ENCODE measurements at regions of chr19 and their contacts with region 1.

Region 1: GRCh38 chr19:42132851-42133528 is 744 bp upstream of the POU2F2 start:
- DNase-seq: no peak
- H3K4me3 ChIP-seq: peak overlapping the region; percentile 31 to 45 (median 33)
- H3K27ac ChIP-seq: no peak overlapping the region
- H3K4me1 ChIP-seq: peaks cover 11 to 22% (median 18%) of the 10 kb centered on the region in 4 donors
- H3K27me3 ChIP-seq: peaks cover 0 to 66% (median 15%) of the 10 kb centered on the region in 4 donors
- CTCF ChIP-seq: peak in 2 of 3 experiments; percentile 88 to 98
- EP300 ChIP-seq: no peak
- POLR2A ChIP-seq: no peak

Region 2: DNA sequence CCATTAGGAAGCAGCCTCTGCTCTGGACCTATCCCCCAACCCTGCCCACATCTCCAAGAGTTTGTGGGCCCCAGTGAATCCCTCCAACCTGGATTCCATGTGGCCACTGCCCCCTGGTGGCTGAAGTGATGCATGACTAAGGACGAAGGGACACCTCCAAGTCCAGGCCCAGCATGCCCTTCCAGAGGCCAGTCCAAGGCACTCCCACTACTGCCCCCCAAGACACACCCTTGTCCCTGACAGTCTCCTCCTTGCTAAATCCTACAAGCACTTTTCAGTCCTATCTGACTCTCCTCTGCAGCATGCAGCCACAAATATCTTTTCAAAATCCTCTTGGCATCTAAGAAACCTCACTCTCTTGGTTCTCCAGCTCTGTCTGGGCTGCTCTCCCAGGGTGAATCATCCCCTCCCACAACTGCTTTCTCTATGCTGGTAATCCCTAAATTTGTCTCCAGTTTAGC is 51.4 kb after region 1 on chr19:
- intact Hi-C with region 1: loop called (anchors 2 kb)
- DNase-seq: no peak
- H3K4me3 ChIP-seq: no peak overlapping the region
- H3K27ac ChIP-seq: no peak overlapping the region
- H3K4me1 ChIP-seq: no peaks in the 10 kb centered on the region
- H3K27me3 ChIP-seq: peaks cover 0 to 36% (median 20%) of the 10 kb centered on the region in 4 donors
- CTCF ChIP-seq: peak; percentile 82 to 91 (median 85)
- EP300 ChIP-seq: no peak
- POLR2A ChIP-seq: no peak

Region 3: DNA sequence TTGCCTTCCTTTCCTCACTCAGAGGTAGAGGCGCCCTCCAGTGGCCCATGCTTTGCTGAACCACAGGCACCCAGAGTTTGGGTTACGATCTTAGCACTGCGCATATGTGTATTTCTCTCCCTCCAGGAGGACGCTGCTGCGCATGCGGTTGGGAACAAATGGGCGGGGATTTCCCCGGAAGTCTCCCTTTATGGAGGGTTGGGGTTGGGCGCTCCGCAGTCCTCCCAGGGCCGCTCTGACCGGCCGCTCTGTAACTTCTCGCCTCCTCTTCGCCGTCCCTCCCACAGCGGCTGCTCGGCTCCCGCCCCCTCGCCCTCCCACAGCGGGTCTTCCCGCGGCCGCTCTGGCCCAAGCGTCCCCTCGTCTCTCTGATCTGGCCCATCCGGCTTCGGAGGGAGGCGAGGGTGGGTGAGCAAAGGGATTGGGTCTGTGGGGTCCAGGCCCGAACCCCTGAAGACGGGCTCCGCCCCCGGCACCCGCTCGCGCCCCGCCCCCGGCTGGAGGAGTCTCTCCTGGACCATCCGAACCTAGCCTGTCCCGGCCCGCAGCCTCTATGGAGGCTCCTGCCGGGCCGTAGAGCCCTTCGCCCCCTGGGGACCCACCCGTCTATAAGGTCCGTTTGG is 192.4 kb after region 1 on chr19 and contains the start of gene MEGF8:
- intact Hi-C with region 1: loop called (anchors 10 kb)
- DNase-seq: peak; percentile 99
- H3K4me3 ChIP-seq: peak within 1 kb of the TSS; percentile 89 to 97 (median 92)
- H3K27ac ChIP-seq: peak within 1 kb of the TSS; percentile 76 to 81 (median 80)
- H3K4me1 ChIP-seq: peaks cover 31 to 47% (median 43%) of the 10 kb centered on the region in 4 donors
- H3K27me3 ChIP-seq: peaks cover 9 to 33% (median 19%) of the 10 kb centered on the region in 4 donors
- CTCF ChIP-seq: peak; percentile 85 to 92 (median 91)
- EP300 ChIP-seq: no peak
- POLR2A ChIP-seq: no peak
- total RNA-seq, gene MEGF8: 18.2 to 46.2 (median 25.5) TPM